Psoas muscle (tissue), 8 donors: ENCODE measurements at regions of chr5 and their contacts with region 1.

Region 1: DNA sequence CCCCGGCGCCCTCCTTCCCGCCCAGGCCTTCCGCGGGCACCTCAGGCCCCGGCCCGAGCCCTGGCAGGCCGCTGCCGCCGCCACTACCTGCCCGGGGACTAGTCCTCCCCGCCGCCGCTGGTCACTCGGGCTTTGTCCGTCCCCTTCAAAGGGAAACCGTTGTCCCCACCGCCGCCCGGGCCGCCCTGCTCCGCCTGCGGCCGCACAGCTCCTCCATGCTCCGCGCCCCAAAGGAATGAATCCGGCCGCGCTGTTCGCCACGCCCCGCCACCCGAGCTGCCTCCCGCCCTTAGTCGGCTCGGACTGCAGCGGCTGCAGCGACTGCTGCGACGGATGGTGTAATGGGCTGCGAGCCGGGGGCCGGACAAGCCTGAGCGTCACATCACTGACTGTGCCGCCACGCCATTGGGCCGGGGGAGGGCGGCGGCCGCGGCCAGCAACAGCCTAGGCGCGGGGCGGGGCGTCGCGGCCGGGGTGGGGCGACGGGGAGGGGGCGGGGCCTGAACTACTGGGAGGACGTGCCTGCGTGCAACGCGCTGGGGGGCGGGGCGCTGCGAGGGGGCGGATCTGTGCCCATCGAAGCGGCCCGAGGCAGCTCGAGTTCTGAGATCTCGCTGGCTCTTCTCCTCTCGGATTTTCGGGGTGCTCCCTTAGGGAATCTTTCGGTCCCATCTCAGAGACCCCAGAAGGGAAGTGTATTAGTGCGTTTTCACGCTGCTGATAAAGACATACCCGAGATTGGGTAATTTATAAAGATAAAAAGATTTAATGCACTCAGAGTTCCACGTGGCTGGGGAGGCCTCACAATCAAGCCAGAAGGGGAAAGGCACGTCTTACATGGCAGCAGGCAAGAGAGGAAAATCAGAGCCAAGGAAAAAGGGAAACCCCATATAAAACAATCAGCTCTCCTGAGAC is at the start of gene FEM1C:
- DNase-seq: peak; percentile 99
- ATAC-seq: peak; percentile 95 to 99 (median 97)
- H3K4me3 ChIP-seq: peak within 1 kb of the TSS; percentile 93
- H3K27ac ChIP-seq: peak within 1 kb of the TSS; percentile 98
- H3K4me1 ChIP-seq: peaks cover 22% of the 10 kb centered on the region
- H3K27me3 ChIP-seq: no peaks in the 10 kb centered on the region
- CTCF ChIP-seq: no peak
- total RNA-seq, gene FEM1C: 26.0 to 44.5 (median 32.8) TPM

Region 2: GRCh38 chr5:115366223-115366622 is 178.5 kb before region 1 on chr5:
- intact Hi-C with region 1: loop called in 1 of 2 experiments (anchors 2 kb)
- DNase-seq: peak; percentile 22 to 59
- ATAC-seq: peak; percentile 96 to 97 (median 97)
- H3K4me3 ChIP-seq: no peak overlapping the region
- H3K27ac ChIP-seq: peak overlapping the region; percentile 67
- H3K4me1 ChIP-seq: peaks cover 9% of the 10 kb centered on the region
- H3K27me3 ChIP-seq: no peaks in the 10 kb centered on the region
- CTCF ChIP-seq: peak; percentile 6

Region 3: GRCh38 chr5:115377468-115378217 is 167.1 kb before region 1 on chr5:
- intact Hi-C with region 1: loop called (anchors 2 to 5 kb)
- DNase-seq: no peak
- ATAC-seq: peak; percentile 41 to 76 (median 59)
- H3K4me3 ChIP-seq: no peak overlapping the region
- H3K27ac ChIP-seq: peak overlapping the region; percentile 80
- H3K4me1 ChIP-seq: peaks cover 47% of the 10 kb centered on the region
- H3K27me3 ChIP-seq: no peaks in the 10 kb centered on the region
- CTCF ChIP-seq: peak; percentile 50

Region 4: DNA sequence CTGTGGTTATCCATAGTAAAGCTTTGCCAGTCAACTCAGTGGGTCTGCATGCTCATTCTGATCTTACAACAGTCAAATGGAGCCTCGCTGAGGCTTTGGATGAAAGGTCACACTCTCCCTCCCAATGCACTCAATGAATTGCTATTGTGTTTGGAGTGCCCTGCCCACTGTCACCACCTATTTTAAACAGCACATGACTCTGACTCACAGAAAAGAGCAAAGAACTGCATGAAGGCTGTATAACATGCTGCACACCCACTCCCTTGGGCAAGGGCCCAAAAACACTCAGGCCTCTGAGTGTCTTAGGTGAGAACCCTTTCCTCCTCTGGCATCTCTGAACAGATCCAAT is 129.6 kb before region 1 on chr5:
- intact Hi-C with region 1: loop called in 1 of 2 experiments (anchors 5 kb)
- DNase-seq: no peak
- ATAC-seq: peak; percentile 18 to 41 (median 37)
- H3K4me3 ChIP-seq: no peak overlapping the region
- H3K27ac ChIP-seq: peak overlapping the region; percentile 17
- H3K4me1 ChIP-seq: peaks cover 18% of the 10 kb centered on the region
- H3K27me3 ChIP-seq: no peaks in the 10 kb centered on the region
- CTCF ChIP-seq: no peak

Region 5: DNA sequence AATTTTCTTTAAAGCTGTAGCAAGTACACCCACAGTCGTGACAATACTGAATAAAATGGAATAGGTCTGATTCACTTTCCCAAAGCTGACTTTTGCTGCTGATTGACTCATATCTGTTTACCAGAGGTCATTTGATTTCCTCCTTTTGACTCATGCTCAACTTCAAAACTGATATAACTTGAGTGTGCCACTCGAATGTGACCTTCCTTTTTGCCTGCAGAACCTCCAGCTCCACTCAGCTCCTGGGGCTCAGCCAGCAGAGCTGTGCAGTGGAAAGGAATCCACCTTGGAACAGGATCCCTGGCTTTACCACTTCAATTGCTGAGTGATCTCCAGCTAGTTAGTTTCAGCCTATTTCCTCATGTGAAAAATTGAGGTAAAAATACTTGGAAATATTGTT is 84.2 kb before region 1 on chr5:
- intact Hi-C with region 1: loop called in 1 of 2 experiments (anchors 5 kb)
- DNase-seq: peak; percentile 62 to 88
- ATAC-seq: peak; percentile 83 to 89 (median 86)
- H3K4me3 ChIP-seq: no peak overlapping the region
- H3K27ac ChIP-seq: peak overlapping the region; percentile 70
- H3K4me1 ChIP-seq: peaks cover 62% of the 10 kb centered on the region
- H3K27me3 ChIP-seq: no peaks in the 10 kb centered on the region
- CTCF ChIP-seq: no peak

Region 6: DNA sequence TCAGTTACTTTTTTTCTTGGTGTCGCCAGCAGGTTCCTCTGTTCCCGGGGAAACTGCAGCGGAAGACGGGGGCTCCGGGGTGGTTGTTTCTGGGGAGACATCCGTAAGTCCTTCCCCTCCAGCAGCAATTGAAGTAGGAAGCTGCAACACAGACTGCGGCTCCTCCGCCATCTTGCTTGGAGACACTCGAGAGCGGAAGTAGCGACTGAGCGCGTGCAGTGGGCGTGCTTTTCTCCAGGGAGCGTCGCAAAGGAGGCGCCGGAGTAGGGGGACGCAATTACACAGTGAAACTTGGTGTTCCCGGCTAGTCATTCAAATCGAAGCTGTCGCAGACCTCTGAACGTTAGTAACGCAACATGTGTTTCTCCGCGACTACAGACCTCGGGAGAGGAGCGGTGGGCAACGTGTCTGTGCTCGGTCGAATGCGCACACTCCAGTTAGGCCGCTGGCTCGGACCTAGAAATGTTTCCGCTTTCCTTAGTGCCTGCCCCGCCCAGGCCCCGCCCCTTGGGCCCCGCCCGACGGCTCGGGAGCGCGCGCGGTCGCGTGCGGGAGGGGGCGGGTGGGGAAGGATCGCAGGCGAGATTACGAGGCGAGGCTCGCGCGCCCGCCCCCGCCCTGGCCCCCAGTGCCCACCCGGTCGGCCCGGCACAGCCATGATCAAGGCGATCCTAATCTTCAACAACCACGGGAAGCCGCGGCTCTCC is 296.8 kb after region 1 on chr5 and contains the starts of genes AP3S1 and ATG12:
- intact Hi-C with region 1: loop called in 1 of 2 experiments (anchors 10 kb)
- DNase-seq: peak; percentile 92 to 95
- ATAC-seq: peak; percentile 95 to 96 (median 96)
- H3K4me3 ChIP-seq: peak within 1 kb of the TSS; percentile 87
- H3K27ac ChIP-seq: peak within 1 kb of the TSS; percentile 96
- H3K4me1 ChIP-seq: peaks cover 53% of the 10 kb centered on the region
- H3K27me3 ChIP-seq: no peaks in the 10 kb centered on the region
- CTCF ChIP-seq: no peak
- total RNA-seq, gene AP3S1: 20.2 to 29.6 (median 26.3) TPM
- total RNA-seq, gene ATG12: 20.3 to 32.8 (median 27.1) TPM